MCF 10A (cell line): ENCODE measurements at regions of chr3 and their contacts with region 1.

Region 1: DNA sequence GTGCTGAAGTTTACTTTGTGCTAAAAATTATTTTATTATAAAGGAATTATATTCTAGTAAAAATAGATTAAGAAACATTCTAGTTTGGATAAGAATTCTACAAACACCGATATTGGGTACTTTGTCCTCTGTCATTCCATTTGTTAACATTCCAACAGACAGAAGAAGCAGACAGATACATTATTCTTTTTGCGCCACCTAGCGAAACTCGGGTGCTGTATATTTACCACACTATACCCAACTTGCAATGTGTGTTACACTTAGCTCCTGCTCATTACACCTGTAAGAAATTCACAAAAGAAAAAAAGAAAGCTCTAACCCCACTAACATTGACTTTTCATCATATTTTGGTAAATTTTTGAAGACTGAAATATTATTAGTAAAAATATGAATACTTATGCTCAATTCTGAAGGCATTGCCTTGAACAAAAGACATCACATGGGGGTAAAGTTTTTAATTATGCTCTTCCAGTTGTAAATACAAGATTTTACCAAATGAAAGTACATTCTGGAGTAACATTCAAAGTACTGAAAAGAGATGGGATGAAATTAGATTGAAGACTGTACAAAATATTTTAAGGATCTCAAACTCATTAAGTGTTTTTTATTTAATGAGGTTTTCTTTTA is 136.5 kb upstream of the MLF1 start:
- DNase-seq: peak; percentile 79
- H3K4me3 Mint-ChIP-seq: no peak overlapping the region
- H3K27ac Mint-ChIP-seq: no peak overlapping the region
- H3K4me1 Mint-ChIP-seq: no peaks in the 10 kb centered on the region
- H3K27me3 Mint-ChIP-seq: no peaks in the 10 kb centered on the region
- CTCF ChIP-seq: peak; percentile 69

Region 2: GRCh38 chr3:157618075-157618760 is 816.3 kb before region 1 on chr3:
- CTCF ChIA-PET with region 1: interaction called, 15 read pairs
- POLR2A ChIA-PET with region 1: interaction called, 3 read pairs
- intact Hi-C with region 1: loop called (anchors 1 kb)
- DNase-seq: peak; percentile 74
- H3K4me3 Mint-ChIP-seq: no peak overlapping the region
- H3K27ac Mint-ChIP-seq: no peak overlapping the region
- H3K4me1 Mint-ChIP-seq: no peaks in the 10 kb centered on the region
- H3K27me3 Mint-ChIP-seq: no peaks in the 10 kb centered on the region
- CTCF ChIP-seq: peak; percentile 41

Region 3: DNA sequence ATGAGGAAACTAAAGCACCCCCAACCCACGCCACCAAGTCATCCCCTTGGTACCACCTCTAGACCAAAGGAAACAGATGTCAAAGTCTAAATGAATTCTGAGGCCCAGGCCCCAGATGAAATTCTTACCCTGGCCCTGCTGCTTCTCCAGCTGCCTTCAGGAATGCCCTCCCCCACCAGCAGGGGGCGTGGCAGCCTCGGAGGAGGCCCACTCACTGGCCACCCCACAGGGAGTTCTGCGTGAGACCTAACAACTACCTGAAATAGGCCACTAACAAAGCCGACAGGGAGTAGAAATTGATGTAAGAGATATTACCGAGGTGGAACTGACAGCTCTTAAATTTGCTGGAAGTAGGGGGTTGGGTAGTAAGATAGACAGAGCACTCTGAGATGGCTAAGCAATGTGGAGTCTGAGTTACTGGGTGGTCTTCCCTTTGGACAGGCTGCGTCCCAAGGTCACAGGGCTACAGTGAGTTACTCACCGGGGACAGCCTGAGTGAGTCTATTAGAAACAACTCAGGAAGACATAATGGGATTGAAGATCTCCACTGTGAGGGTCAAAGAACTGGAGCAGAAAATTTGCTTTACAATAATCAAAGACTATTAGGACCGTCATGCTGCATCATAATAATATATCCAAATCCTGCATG is 569.0 kb before region 1 on chr3:
- CTCF ChIA-PET with region 1: interaction called, 6 read pairs
- POLR2A ChIA-PET with region 1: no interaction called
- intact Hi-C with region 1: loop called (anchors 1 kb)
- DNase-seq: peak; percentile 52
- H3K4me3 Mint-ChIP-seq: no peak overlapping the region
- H3K27ac Mint-ChIP-seq: no peak overlapping the region
- H3K4me1 Mint-ChIP-seq: no peaks in the 10 kb centered on the region
- H3K27me3 Mint-ChIP-seq: no peaks in the 10 kb centered on the region
- CTCF ChIP-seq: peak; percentile 64

Region 4: GRCh38 chr3:158313338-158313927 is 121.1 kb before region 1 on chr3:
- CTCF ChIA-PET with region 1: interaction called, 5 read pairs
- POLR2A ChIA-PET with region 1: no interaction called
- intact Hi-C with region 1: loop called (anchors 5 kb)
- DNase-seq: peak; percentile 52
- H3K4me3 Mint-ChIP-seq: no peak overlapping the region
- H3K27ac Mint-ChIP-seq: peak overlapping the region; percentile 25
- H3K4me1 Mint-ChIP-seq: peaks cover 5% of the 10 kb centered on the region
- H3K27me3 Mint-ChIP-seq: no peaks in the 10 kb centered on the region
- CTCF ChIP-seq: peak; percentile 38

Region 5: DNA sequence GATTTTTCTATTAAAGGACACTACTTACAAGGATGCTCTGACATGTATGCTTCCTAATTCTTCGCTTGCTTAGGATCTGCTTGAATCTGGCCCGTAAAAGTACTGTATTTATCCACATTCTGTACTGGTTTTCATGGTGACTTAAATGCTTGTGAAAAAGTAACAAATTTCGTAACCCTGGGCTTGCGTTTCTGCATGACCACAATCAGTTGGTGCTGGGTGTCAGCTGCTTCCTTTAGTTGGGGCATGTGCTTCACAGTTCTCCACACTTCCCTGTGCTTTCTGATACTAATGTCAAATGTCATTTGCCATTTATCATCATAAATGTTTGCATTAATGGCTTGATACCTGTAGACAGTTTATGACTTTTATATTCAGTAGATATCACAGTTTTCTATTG is 82.0 kb before region 1 on chr3:
- CTCF ChIA-PET with region 1: no interaction called
- POLR2A ChIA-PET with region 1: no interaction called
- intact Hi-C with region 1: no loop called
- DNase-seq: peak; percentile 18
- H3K4me3 Mint-ChIP-seq: no peak overlapping the region
- H3K27ac Mint-ChIP-seq: no peak overlapping the region
- H3K4me1 Mint-ChIP-seq: peaks cover 6% of the 10 kb centered on the region
- H3K27me3 Mint-ChIP-seq: no peaks in the 10 kb centered on the region
- CTCF ChIP-seq: no peak